Activated CD8-positive, alpha-beta T cell treated with anti-CD3 and anti-CD28 coated beads for 36 hours (primary cell): ENCODE measurements at regions of chr16 and their contacts with region 1.

Region 1: DNA sequence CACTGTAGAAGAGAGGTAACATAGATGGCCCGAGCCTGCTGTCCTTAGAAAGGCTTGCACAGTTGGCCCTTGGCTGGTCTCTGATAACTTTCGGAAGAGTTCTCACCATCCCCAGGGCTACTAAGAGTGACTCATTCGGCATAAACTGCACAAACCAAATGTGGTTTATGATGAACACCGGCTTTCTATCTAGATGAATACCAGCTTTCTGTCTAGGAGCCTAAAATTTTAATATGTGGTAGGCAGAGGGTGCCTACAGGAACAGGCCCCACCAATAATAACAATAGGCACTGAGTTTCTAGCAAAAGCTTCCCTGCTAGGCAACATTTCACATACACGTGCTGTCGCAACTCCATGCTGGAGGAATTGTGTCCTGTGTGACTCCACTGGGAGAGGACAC is 15.4 kb downstream of the CNOT1 start:
- DNase-seq: no peak
- ATAC-seq: no peak
- H3K4me3 Mint-ChIP-seq: no peak overlapping the region
- H3K27ac Mint-ChIP-seq: no peak overlapping the region
- H3K4me1 Mint-ChIP-seq: peaks cover 13% of the 10 kb centered on the region
- H3K27me3 Mint-ChIP-seq: no peaks in the 10 kb centered on the region
- CTCF ChIP-seq: no peak

Region 2: GRCh38 chr16:58366247-58367031 is 247.8 kb before region 1 on chr16:
- CTCF ChIA-PET with region 1: no interaction called
- POLR2A ChIA-PET with region 1: no interaction called
- intact Hi-C with region 1: no loop called
- DNase-seq: no peak
- ATAC-seq: peak; percentile 64
- H3K4me3 Mint-ChIP-seq: no peak overlapping the region
- H3K27ac Mint-ChIP-seq: no peak overlapping the region
- H3K4me1 Mint-ChIP-seq: no peaks in the 10 kb centered on the region
- H3K27me3 Mint-ChIP-seq: peaks cover 22% of the 10 kb centered on the region
- CTCF ChIP-seq: no peak

Region 3: DNA sequence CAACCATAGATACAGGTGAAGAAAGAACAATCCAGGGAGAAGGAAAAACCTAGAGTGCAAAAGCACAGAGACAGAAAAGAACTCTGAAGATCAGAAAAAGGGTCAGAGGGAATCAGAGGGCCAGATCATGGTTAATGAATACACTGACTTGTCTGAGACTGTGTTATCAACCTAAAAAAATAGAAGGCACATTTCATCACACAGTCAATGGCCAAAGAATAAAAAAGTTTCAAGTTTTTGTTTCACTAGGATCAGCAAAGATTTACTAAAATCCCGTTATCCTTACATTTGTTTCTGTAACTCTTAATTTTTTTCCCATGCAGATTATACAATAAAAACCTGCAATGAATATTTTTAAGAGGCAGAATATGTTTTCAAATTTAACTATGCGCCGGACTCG is 23.1 kb before region 1 on chr16:
- CTCF ChIA-PET with region 1: no interaction called
- POLR2A ChIA-PET with region 1: no interaction called
- intact Hi-C with region 1: no loop called
- DNase-seq: no peak
- ATAC-seq: no peak
- H3K4me3 Mint-ChIP-seq: no peak overlapping the region
- H3K27ac Mint-ChIP-seq: peak overlapping the region; percentile 4
- H3K4me1 Mint-ChIP-seq: peaks cover 29% of the 10 kb centered on the region
- H3K27me3 Mint-ChIP-seq: no peaks in the 10 kb centered on the region
- CTCF ChIP-seq: no peak

Region 4: DNA sequence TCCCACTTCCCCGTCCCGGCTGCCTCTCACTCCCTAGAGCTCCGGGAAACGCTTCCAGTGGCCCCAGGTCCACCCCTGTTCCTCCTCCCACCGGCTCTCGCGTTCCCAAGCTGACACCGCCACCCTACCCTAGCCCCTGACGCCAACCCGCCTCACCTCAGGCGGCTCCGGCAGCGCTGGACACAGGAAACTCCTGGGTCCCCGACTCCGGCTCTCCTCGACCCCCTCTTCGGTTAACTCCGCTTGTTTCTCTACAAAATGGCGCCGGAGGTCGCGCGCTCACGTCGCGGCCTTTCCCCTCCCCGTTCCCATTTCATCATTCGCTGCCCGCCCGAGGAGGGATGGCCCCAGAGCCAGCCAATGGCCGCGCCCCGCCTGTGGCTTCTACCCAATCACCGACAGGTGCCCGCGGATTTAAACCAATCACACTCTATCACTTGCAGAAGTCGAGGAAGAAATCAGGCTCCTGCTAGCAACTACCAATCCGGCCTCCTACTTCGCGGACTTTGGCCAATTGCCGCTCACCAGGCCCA is 15.4 kb after region 1 on chr16 and contains the start of gene CNOT1:
- CTCF ChIA-PET with region 1: no interaction called
- POLR2A ChIA-PET with region 1: interaction called, 10 read pairs
- intact Hi-C with region 1: no loop called
- DNase-seq: peak; percentile 98
- ATAC-seq: peak; percentile 88
- H3K4me3 Mint-ChIP-seq: peak within 1 kb of the TSS; percentile 100
- H3K27ac Mint-ChIP-seq: peak within 1 kb of the TSS; percentile 100
- H3K4me1 Mint-ChIP-seq: peaks cover 25% of the 10 kb centered on the region
- H3K27me3 Mint-ChIP-seq: no peaks in the 10 kb centered on the region
- CTCF ChIP-seq: no peak
- total RNA-seq, gene CNOT1: 274 to 281 TPM

Region 5: DNA sequence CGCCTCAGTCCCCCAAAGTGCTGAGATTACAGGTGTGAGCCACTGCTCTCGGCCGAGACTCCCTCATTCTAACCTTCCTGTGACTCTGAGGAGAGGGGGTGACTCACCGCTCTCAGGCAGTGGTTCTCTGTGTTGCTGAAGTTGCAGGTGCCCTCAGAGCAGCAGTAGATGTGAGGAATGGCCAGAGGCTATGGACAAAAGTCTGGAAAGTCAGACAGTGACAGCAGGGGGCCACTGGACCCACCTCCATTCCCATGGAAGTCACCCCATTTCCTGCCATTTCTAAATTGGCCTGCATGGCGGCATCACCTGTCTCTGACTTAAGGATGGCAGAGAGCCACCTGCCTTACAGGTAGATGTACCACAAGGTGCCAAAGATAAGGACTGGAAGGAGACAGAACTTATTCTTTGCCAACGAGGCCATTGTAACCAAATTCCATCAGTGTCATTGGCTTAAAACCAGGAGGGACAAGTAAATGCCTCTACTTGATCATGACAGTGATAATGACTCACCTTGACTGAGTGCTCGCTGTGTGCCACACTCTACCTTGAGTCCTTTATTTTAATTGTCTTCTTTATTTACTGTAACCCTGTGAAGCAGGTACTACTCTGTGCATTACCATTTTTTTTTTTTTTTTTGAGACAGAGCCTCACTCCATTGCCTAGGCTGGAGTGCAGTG is 30.7 kb after region 1 on chr16:
- CTCF ChIA-PET with region 1: no interaction called
- POLR2A ChIA-PET with region 1: no interaction called
- intact Hi-C with region 1: no loop called
- DNase-seq: no peak
- ATAC-seq: no peak
- H3K4me3 Mint-ChIP-seq: no peak overlapping the region
- H3K27ac Mint-ChIP-seq: no peak overlapping the region
- H3K4me1 Mint-ChIP-seq: no peaks in the 10 kb centered on the region
- H3K27me3 Mint-ChIP-seq: peaks cover under 1% of the 10 kb centered on the region
- CTCF ChIP-seq: no peak

Region 6: GRCh38 chr16:58684354-58685083 is 70.3 kb after region 1 on chr16 and contains the start of gene SLC38A7:
- CTCF ChIA-PET with region 1: no interaction called
- POLR2A ChIA-PET with region 1: no interaction called
- intact Hi-C with region 1: no loop called
- DNase-seq: peak; percentile 87
- ATAC-seq: peak; percentile 96
- H3K4me3 Mint-ChIP-seq: peak within 1 kb of the TSS; percentile 91
- H3K27ac Mint-ChIP-seq: peak within 1 kb of the TSS; percentile 68
- H3K4me1 Mint-ChIP-seq: peaks cover 16% of the 10 kb centered on the region
- H3K27me3 Mint-ChIP-seq: no peaks in the 10 kb centered on the region
- CTCF ChIP-seq: no peak
- total RNA-seq, gene SLC38A7: 5.1 to 6.0 TPM